Astrocyte of the cerebellum (primary cell): ENCODE measurements at regions of chr15 and their contacts with region 1.

Region 1: DNA sequence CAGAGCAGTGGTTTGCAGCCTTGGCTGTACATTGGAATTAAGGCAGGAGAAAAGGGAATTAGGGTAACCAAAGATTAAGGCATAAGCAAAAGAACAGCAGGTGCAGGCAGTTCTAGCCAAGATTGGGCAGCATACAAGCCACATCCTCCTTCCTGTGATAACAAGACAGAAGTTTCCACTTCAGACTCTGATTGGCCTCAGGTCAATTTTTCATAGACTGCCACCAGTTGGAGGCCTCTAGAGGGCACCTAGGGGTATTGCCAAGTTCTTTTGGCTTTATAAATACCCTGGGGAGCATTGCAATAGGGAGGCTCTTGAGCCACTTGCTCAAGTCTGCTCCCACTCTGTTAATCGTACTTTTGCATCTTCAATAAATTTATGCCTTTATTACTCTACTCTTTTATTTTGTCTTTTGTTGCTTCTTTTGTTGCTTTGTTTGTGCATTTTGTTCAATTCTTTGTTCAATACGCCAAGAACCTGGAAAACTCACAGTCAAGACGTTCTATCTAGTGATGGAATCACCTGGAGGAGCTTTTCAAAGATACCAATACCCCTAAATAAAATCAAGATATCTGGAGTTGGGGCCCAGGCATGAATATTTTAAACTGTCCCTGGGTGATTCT is 32.2 kb upstream of the FMN1 start:
- DNase-seq: no peak
- H3K4me3 ChIP-seq: no peak overlapping the region
- CTCF ChIP-seq: peak; percentile 25

Region 2: GRCh38 chr15:33608714-33609113 is 382.0 kb after region 1 on chr15:
- in situ Hi-C with region 1: loop called (anchors 10 kb)
- DNase-seq: no peak
- H3K4me3 ChIP-seq: no peak overlapping the region
- CTCF ChIP-seq: peak; percentile 45

Region 3: DNA sequence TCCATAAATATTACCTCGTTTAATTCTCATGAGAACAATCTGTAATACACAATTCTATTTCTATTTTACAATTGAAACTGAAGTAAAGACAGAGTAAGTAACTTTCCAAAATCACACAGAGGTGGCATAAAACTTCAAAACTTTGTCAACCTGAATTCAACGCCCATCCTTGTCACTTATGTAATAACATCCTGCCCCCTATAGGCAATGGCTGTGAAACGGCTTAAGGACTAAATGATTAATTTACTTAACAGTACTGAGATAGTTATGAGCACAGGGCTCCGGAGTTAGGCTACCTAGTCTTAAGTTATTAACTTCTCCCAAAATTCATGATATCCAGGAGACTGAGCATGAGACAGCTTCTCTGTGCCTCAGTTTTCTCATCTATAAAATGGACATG is 448.6 kb after region 1 on chr15:
- in situ Hi-C with region 1: loop called (anchors 25 kb)
- DNase-seq: peak; percentile 13
- H3K4me3 ChIP-seq: no peak overlapping the region
- CTCF ChIP-seq: peak; percentile 55